ENCODE measurements at regions of chr14 and their contacts with region 1.

Region 1: GRCh38 chr14:21092273-21093011 is 6.0 kb downstream of the ZNF219 start:
- DNase-seq: peak; percentile 91
- H3K4me3 Mint-ChIP-seq: no peak overlapping the region
- H3K27ac Mint-ChIP-seq: no peak overlapping the region
- H3K4me1 Mint-ChIP-seq: peaks cover 24% of the 10 kb centered on the region
- H3K27me3 Mint-ChIP-seq: peaks cover 6% of the 10 kb centered on the region

Region 2: GRCh38 chr14:20998664-20999366 is 93.6 kb before region 1 on chr14 and contains the start of gene SLC39A2:
- CTCF ChIA-PET with region 1: interaction called, 12 read pairs
- POLR2A ChIA-PET with region 1: no interaction called
- DNase-seq: no peak
- H3K4me3 Mint-ChIP-seq: no peak within 1 kb of the TSS
- H3K27ac Mint-ChIP-seq: no peak within 1 kb of the TSS
- H3K4me1 Mint-ChIP-seq: peaks cover 19% of the 10 kb centered on the region
- H3K27me3 Mint-ChIP-seq: no peaks in the 10 kb centered on the region
- total RNA-seq, gene SLC39A2: 0.25 to 0.37 TPM

Region 3: DNA sequence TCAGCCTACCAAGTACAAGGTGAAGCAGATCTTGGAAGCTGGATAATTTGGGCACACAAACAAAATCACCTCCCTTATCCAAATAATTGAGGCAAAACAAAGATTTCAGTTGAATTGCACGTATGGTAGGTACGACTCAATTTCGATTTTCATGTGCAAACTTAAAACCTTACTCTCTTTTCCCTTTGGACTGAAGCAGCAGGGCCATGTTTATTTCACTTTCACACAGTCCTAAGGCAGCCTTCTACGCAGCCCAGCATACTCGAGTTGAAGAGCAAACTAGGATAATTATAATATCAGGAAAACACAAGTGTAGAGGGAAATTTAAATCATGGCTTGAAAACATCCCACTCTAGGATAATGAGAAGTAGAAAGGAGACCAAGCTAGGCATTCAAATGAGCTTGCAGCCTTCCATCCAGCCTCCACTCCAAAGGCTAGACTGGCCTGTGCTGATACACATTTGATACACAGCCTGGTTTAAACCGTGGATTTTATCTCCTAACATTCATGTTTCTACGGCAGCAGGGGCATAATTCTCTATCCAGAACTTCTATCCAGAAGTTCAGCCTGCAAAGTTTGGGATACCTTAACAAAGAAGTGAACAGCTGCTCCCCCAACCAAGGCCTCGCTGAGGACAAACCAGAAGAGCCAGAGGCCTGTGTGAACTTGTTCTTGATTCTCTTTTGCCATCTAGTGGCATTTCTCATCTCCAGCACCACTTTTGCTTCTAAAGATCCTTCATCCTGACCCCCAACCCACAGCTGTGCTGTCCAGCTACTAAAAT is 52.7 kb before region 1 on chr14:
- CTCF ChIA-PET with region 1: interaction called, 12 read pairs
- POLR2A ChIA-PET with region 1: no interaction called
- DNase-seq: peak; percentile 32
- H3K4me3 Mint-ChIP-seq: no peak overlapping the region
- H3K27ac Mint-ChIP-seq: no peak overlapping the region
- H3K4me1 Mint-ChIP-seq: peaks cover 5% of the 10 kb centered on the region
- H3K27me3 Mint-ChIP-seq: peaks cover 12% of the 10 kb centered on the region

Region 4: DNA sequence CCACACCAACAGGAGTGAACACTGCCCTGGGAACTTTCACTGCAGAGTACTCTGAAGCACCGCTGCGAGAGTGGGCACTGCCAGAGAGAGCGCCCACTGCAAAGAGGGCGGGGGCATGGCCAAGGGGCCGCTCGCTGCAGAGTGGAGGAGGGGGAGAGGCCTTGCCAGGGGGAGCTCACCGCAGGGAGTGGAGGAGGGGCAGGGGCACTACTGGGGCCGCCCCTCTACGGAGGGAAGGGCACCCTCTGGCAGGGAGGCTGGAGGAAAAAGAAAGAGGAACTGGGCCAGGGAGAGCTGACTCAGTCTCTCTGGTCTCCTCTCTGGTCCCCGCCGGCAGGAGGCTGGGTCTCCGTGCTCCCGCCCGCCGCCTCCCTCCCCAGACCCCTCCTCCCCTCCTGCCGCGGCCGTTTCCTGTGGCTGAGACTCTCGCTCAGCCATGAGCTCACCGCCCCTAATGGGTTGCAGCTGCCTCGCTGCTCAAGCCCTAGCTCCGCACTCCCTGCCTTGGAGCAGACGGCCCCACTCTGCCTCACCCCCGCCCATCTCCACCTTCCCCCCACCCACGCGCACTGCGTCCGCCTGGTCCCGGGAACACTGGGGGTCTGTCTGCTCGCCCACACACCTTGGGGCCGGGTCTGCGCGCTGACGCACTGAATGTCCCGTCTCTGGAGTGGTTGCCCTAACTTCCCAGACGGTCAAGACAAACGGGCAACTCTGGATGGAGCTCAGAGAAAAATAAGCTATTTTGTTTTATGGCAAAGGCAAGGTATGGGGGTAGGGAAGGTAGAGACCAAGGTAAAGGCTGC is 21.0 kb before region 1 on chr14:
- CTCF ChIA-PET with region 1: interaction called, 25 read pairs
- POLR2A ChIA-PET with region 1: no interaction called
- DNase-seq: peak; percentile 50
- H3K4me3 Mint-ChIP-seq: peak overlapping the region; percentile 61
- H3K27ac Mint-ChIP-seq: no peak overlapping the region
- H3K4me1 Mint-ChIP-seq: peaks cover 34% of the 10 kb centered on the region
- H3K27me3 Mint-ChIP-seq: peaks cover 63% of the 10 kb centered on the region

Region 5: DNA sequence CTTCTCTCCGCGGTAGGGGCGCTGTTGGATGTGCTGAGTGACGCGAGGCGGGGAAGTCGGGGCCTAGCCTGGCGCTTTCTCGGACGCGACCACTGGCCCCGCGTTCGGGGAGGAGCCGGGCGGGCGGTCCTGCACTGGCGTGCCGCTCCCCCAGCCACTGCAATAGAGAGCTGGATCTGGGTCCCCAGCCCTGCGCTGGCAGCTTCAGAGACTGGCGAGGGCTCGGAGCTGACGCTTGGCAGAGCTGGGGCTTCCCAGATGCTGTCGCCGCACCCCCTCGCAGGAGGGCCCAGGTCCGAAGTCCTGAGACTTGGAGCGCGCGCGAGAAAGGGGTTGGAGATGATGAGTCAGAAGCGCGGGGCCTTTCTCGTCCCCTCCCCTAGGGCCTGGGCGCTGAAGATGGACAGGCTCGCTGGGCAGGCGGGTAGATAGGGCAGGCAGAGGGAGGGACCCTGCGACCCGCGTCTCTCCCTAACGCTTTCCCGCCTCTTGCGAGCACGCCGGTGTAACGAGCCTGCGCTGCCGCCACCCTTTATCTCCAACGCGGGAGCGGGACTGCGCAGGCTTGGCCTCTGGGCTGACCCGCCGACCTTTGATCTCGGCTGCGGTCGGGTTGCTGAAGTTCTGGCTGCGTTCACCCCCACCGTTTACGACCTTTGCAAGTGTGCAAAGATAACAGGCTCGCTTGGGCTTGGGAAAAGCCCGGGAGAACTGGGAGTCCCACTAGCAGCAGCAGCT is 11.4 kb after region 1 on chr14:
- CTCF ChIA-PET with region 1: interaction called, 121 read pairs
- POLR2A ChIA-PET with region 1: interaction called, 5 read pairs
- DNase-seq: peak; percentile 97
- H3K4me3 Mint-ChIP-seq: peak overlapping the region; percentile 87
- H3K27ac Mint-ChIP-seq: peak overlapping the region; percentile 93
- H3K4me1 Mint-ChIP-seq: peaks cover 44% of the 10 kb centered on the region
- H3K27me3 Mint-ChIP-seq: peaks cover 7% of the 10 kb centered on the region

Region 6: DNA sequence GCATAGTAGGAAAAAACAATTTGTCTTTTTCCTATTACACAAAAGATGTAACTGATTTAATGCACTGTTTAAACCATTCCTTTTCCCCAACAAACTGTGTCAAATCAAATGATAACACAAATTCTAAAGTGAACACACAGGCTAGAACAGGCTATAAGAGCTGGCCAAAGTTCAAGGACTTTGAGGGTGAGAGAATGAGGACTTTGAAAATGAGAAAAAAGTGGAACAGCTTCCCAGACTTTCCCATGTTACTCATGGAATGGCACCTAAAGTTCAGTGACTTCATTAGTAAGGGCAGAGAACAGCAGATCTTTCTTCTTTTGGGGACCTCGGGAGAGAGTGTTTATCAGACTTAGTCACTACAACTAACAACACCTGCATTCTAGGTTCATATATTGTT is 31.0 kb after region 1 on chr14:
- CTCF ChIA-PET with region 1: no interaction called
- POLR2A ChIA-PET with region 1: no interaction called
- DNase-seq: no peak
- H3K4me3 Mint-ChIP-seq: no peak overlapping the region
- H3K27ac Mint-ChIP-seq: no peak overlapping the region
- H3K4me1 Mint-ChIP-seq: peaks cover 3% of the 10 kb centered on the region
- H3K27me3 Mint-ChIP-seq: peaks cover 32% of the 10 kb centered on the region

Region 7: DNA sequence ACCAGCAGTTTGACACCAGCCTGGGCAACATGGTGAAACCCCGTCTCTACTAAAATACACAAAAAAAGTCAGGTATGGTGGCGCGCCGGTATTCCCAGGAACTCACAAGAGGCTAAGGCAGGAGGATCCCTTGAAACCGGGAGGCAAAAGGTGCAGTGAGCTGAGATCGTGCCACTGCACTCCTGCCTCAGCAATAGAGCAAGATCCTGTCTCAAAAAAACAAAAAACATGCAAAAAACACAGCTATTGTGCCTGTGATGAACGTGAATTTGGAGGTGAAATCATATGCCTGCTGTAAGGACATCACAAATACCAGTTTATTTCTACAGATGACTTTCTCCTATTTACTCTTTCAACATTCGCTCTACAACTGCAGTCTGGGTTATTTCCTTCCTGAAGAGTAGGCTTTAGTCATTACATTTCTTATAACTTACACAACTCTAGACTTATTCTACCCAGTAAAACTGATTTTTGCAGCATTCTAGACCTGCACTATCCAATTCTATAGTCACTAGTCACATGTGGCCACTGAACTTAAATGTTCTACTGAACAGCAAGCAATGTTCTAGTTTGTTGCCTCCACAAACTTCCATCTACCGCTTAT is 128.5 kb after region 1 on chr14:
- CTCF ChIA-PET with region 1: no interaction called
- POLR2A ChIA-PET with region 1: no interaction called
- DNase-seq: no peak
- H3K4me3 Mint-ChIP-seq: no peak overlapping the region
- H3K27ac Mint-ChIP-seq: peak overlapping the region; percentile 10
- H3K4me1 Mint-ChIP-seq: peaks cover 64% of the 10 kb centered on the region
- H3K27me3 Mint-ChIP-seq: no peaks in the 10 kb centered on the region

Region 8: GRCh38 chr14:21346549-21347135 is 254.2 kb after region 1 on chr14:
- CTCF ChIA-PET with region 1: no interaction called
- POLR2A ChIA-PET with region 1: no interaction called
- DNase-seq: no peak
- H3K4me3 Mint-ChIP-seq: no peak overlapping the region
- H3K27ac Mint-ChIP-seq: no peak overlapping the region
- H3K4me1 Mint-ChIP-seq: peaks cover 9% of the 10 kb centered on the region
- H3K27me3 Mint-ChIP-seq: no peaks in the 10 kb centered on the region

Measured in activated CD4-positive, alpha-beta T cell treated with anti-CD3 and anti-CD28 coated beads, Interleukin-2, amount 10 ng/mL, durations not matched to agents 7 days and 5 days (primary cell).